ENCODE measurements at regions of chr1 and their contacts with region 1.

Region 1: GRCh38 chr1:78676347-78676982 is 26.8 kb downstream of the IFI44 start:
- DNase-seq: peak; percentile 28
- H3K4me3 ChIP-seq: no peak overlapping the region; a peak in 1 of 4 replicates
- H3K27ac ChIP-seq: no peak overlapping the region
- H3K4me1 ChIP-seq: no peaks in the 10 kb centered on the region
- H3K27me3 ChIP-seq: no peaks in the 10 kb centered on the region
- CTCF ChIP-seq: peak; percentile 93
- EP300 ChIP-seq: no peak
- RAD21 ChIP-seq: peak; percentile 84

Region 2: GRCh38 chr1:78126506-78126905 is 550.0 kb before region 1 on chr1:
- CTCF ChIA-PET with region 1: interaction called, 11 read pairs
- POLR2A ChIA-PET with region 1: no interaction called
- DNase-seq: no peak
- H3K4me3 ChIP-seq: no peak overlapping the region
- H3K27ac ChIP-seq: no peak overlapping the region
- H3K4me1 ChIP-seq: no peaks in the 10 kb centered on the region
- H3K27me3 ChIP-seq: no peaks in the 10 kb centered on the region
- CTCF ChIP-seq: no peak
- EP300 ChIP-seq: no peak
- RAD21 ChIP-seq: no peak

Region 3: DNA sequence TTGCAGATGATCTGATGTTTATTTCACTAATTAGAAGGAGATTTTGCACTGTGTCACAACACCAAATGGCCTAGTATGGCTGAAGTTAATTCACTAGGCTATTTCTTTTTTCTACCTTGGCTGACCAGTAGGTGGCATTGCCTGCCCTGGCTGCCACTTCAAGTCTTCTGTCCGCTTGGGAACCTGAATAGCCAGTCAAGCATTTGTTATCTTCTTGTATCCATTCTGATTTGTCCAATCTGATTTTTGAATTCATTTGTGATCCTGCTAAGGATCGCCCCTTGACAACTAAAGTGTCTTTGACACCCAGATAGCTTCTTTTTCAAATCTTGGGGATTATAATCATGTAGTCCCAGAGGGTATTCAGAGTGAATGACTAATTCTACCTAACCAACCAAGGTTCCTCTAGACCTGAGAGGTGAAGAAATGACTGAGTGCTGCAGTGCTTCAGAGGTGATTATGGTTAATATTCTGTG is 531.3 kb before region 1 on chr1:
- CTCF ChIA-PET with region 1: interaction called, 24 read pairs
- POLR2A ChIA-PET with region 1: no interaction called
- DNase-seq: peak; percentile 48
- H3K4me3 ChIP-seq: no peak overlapping the region; a peak in 1 of 4 replicates
- H3K27ac ChIP-seq: peak overlapping the region in 1 of 2 experiments; percentile 62; a peak in 1 of 4 replicates
- H3K4me1 ChIP-seq: peaks cover 10 to 11% of the 10 kb centered on the region in 2 experiments; a peak in 3 of 4 replicates
- H3K27me3 ChIP-seq: no peaks in the 10 kb centered on the region
- CTCF ChIP-seq: peak; percentile 95
- EP300 ChIP-seq: no peak
- RAD21 ChIP-seq: peak; percentile 98

Region 4: GRCh38 chr1:78491451-78492071 is 184.9 kb before region 1 on chr1:
- CTCF ChIA-PET with region 1: no interaction called
- POLR2A ChIA-PET with region 1: no interaction called
- DNase-seq: peak; percentile 57
- H3K4me3 ChIP-seq: peak overlapping the region; percentile 78 to 95
- H3K27ac ChIP-seq: peak overlapping the region; percentile 19 to 82
- H3K4me1 ChIP-seq: peaks cover 5 to 21% of the 10 kb centered on the region in 2 experiments; a peak in 3 of 4 replicates
- H3K27me3 ChIP-seq: no peaks in the 10 kb centered on the region
- CTCF ChIP-seq: no peak
- EP300 ChIP-seq: no peak
- RAD21 ChIP-seq: no peak

Region 5: DNA sequence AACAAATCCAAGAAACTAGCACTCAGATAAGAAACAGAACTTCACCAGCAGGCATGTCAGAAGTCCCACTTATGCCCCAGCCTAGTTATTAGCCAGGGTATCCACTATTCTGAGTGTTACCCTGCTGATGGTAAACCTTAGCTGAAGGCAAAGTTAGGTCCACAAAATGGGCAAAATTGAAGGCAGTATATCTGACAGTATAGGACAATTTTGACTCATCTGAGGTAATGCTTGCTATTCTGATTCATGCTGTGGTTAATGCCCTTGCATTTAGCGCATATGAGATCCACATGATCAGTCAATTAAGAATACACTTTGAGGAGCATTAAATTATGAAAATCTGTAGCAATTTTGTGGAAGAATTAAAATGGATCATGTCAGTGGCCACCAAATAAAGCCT is 11.7 kb before region 1 on chr1:
- CTCF ChIA-PET with region 1: interaction called, 10 read pairs
- POLR2A ChIA-PET with region 1: no interaction called
- DNase-seq: no peak
- H3K4me3 ChIP-seq: no peak overlapping the region
- H3K27ac ChIP-seq: no peak overlapping the region
- H3K4me1 ChIP-seq: peaks cover 0 to 2% of the 10 kb centered on the region in 2 experiments; a peak in 1 of 4 replicates
- H3K27me3 ChIP-seq: no peaks in the 10 kb centered on the region
- CTCF ChIP-seq: no peak
- EP300 ChIP-seq: no peak
- RAD21 ChIP-seq: no peak